ENCODE measurements at regions of chr1 and their contacts with region 1.

Region 1: GRCh38 chr1:174743654-174744561 is 255.8 kb upstream of the CACYBP start:
- DNase-seq: peak; percentile 55

Region 2: DNA sequence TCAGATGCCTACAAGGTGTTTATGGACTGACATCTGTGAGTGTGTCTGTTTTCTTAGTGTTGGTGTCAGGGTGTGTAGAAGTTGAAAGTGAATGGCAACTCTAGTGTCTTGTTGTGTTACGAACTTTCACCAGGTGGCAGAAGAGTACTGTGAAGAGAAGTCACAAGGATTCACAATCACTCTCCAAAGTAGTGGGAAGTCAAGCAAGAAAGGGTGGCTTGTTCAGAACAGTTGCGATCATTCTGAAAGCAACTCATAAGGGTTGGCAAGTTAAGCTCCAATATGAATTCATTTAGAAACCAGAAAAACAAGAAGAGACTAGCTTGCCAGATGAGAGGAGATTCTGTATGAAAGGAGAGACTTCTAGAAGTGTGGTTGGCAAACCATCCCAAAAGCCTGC is 1998.9 kb before region 1 on chr1:
- in situ Hi-C with region 1: loop called (anchors 25 kb)
- DNase-seq: peak; percentile 83

Region 3: GRCh38 chr1:174114788-174115448 is 629.0 kb before region 1 on chr1:
- in situ Hi-C with region 1: loop called (anchors 25 kb)
- DNase-seq: peak; percentile 80

Region 4: GRCh38 chr1:174262349-174263241 is 481.3 kb before region 1 on chr1:
- in situ Hi-C with region 1: loop called (anchors 25 kb)
- DNase-seq: peak; percentile 74

Region 5: GRCh38 chr1:174916846-174917245 is 172.9 kb after region 1 on chr1:
- in situ Hi-C with region 1: no loop called
- DNase-seq: no peak

Measured in KBM-7 (cell line).